Cardiac septum (tissue), 1 donor: ENCODE measurements at regions of chr20 and their contacts with region 1.

Region 1: GRCh38 chr20:44217342-44218092 is 6.9 kb upstream of the OSER1 start:
- DNase-seq: peak; percentile 85

Region 2: GRCh38 chr20:44310664-44311639 is 93.4 kb after region 1 on chr20 and contains the start of gene FITM2:
- intact Hi-C with region 1: loop called (anchors 1 kb)
- DNase-seq: peak; percentile 99
- total RNA-seq, gene FITM2: 94.0 TPM

Region 3: GRCh38 chr20:44475694-44476560 is 258.4 kb after region 1 on chr20 and contains the start of gene TTPAL:
- intact Hi-C with region 1: loop called (anchors 5 kb)
- DNase-seq: peak; percentile 95
- total RNA-seq, gene TTPAL: 5.3 TPM